T-cell (primary cell): ENCODE measurements at regions of chr4 and their contacts with region 1.

Region 1: DNA sequence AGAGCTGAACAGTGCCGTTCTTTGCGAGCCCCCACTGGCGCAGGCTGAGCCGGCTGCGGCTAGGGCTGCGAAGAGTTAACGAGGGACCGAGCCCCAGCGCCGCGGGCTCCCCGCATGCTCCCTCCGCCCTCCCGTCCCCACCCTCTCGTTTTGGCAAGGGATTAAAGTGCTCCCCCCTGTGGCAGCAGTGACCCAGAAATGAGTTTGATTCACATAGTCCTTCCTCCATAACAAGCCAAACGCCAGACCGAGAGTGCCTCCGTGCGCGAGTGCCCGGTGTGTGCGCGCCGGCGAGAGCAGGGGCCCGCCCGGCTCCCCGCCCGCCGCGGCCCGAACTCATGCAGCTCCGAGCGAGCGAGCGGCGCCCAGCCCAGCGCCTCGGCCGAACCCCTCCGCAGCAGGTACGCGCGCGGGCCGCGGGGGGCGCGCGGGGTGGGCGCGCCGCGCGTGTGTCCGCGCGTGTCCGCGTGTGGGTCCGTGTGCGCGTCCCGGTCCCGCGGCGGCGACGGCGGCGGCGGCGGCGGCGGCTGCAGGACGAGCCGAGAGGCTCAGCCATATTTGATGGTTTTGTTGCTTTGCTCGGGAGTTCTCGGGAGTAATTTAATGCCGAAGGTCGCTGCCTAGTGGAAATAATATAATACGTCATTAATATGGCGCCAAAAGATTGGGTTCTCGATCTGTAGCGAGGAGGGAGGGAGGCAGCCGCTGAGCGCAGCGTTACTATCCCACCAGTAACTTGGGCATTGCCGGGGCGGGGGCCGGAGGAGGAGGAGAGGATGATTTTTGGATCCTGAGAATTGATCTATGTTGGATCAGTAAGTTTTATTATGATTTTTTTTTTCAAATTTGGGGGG is at the start of gene JADE1:
- DNase-seq: peak; percentile 80 to 94 (median 89)
- ATAC-seq: peak; percentile 62 to 69 (median 64)
- H3K4me3 ChIP-seq: peak within 1 kb of the TSS; percentile 79 to 96
- H3K4me3 Mint-ChIP-seq: peak within 1 kb of the TSS; percentile 96 to 100 (median 96)
- H3K27ac ChIP-seq: peak within 1 kb of the TSS; percentile 91
- H3K27ac Mint-ChIP-seq: peak within 1 kb of the TSS; percentile 97 to 98
- H3K4me1 ChIP-seq: peaks cover 8 to 10% of the 10 kb centered on the region in 2 experiments
- H3K4me1 Mint-ChIP-seq: peaks cover 17 to 20% (median 19%) of the 10 kb centered on the region in 3 donors
- H3K27me3 ChIP-seq: no peaks in the 10 kb centered on the region
- H3K27me3 Mint-ChIP-seq: no peaks in the 10 kb centered on the region
- total RNA-seq, gene JADE1: 51.3 to 63.0 (median 56.6) TPM

Region 2: GRCh38 chr4:128461291-128462102 is 348.2 kb before region 1 on chr4:
- CTCF ChIA-PET with region 1: no interaction called
- POLR2A ChIA-PET with region 1: interaction called in 1 of 2 experiments, 12 read pairs
- DNase-seq: no peak
- ATAC-seq: no peak
- H3K4me3 ChIP-seq: no peak overlapping the region
- H3K4me3 Mint-ChIP-seq: no peak overlapping the region
- H3K27ac ChIP-seq: no peak overlapping the region
- H3K27ac Mint-ChIP-seq: no peak overlapping the region
- H3K4me1 ChIP-seq: no peaks in the 10 kb centered on the region
- H3K4me1 Mint-ChIP-seq: no peaks in the 10 kb centered on the region
- H3K27me3 ChIP-seq: no peaks in the 10 kb centered on the region
- H3K27me3 Mint-ChIP-seq: no peaks in the 10 kb centered on the region

Region 3: GRCh38 chr4:128855621-128856020 is 45.9 kb after region 1 on chr4:
- CTCF ChIA-PET with region 1: interaction called in 1 of 2 experiments, 5 read pairs
- POLR2A ChIA-PET with region 1: interaction called, 5 to 13 read pairs
- DNase-seq: no peak
- ATAC-seq: no peak
- H3K4me3 ChIP-seq: no peak overlapping the region
- H3K4me3 Mint-ChIP-seq: no peak overlapping the region
- H3K27ac ChIP-seq: no peak overlapping the region
- H3K27ac Mint-ChIP-seq: no peak overlapping the region
- H3K4me1 ChIP-seq: peaks cover 15 to 19% of the 10 kb centered on the region in 2 experiments
- H3K4me1 Mint-ChIP-seq: peaks cover 31 to 39% (median 38%) of the 10 kb centered on the region in 3 donors
- H3K27me3 ChIP-seq: no peaks in the 10 kb centered on the region
- H3K27me3 Mint-ChIP-seq: no peaks in the 10 kb centered on the region

Region 4: GRCh38 chr4:128863312-128864075 is 53.8 kb after region 1 on chr4:
- CTCF ChIA-PET with region 1: interaction called, 7 to 10 read pairs
- POLR2A ChIA-PET with region 1: no interaction called
- DNase-seq: peak in 34 of 35 experiments; percentile 20 to 83 (median 53)
- ATAC-seq: peak in 2 of 4 experiments; percentile 30 to 35
- H3K4me3 ChIP-seq: no peak overlapping the region
- H3K4me3 Mint-ChIP-seq: no peak overlapping the region
- H3K27ac ChIP-seq: peak overlapping the region; percentile 51
- H3K27ac Mint-ChIP-seq: peak overlapping the region in 1 of 2 donors; percentile 36
- H3K4me1 ChIP-seq: peaks cover 9 to 28% of the 10 kb centered on the region in 2 experiments
- H3K4me1 Mint-ChIP-seq: peaks cover 38 to 56% (median 39%) of the 10 kb centered on the region in 3 donors
- H3K27me3 ChIP-seq: no peaks in the 10 kb centered on the region
- H3K27me3 Mint-ChIP-seq: no peaks in the 10 kb centered on the region